HCT116 (cell line): ENCODE measurements at regions of chr10 and their contacts with region 1.

Region 1: GRCh38 chr10:28302638-28303488 is at the start of gene MPP7:
- DNase-seq: peak; percentile 98
- ATAC-seq: peak; percentile 98
- H3K4me3 ChIP-seq: peak within 1 kb of the TSS; percentile 59 to 70
- H3K27ac ChIP-seq: peak within 1 kb of the TSS; percentile 97
- H3K4me1 ChIP-seq: peaks cover 27 to 32% of the 10 kb centered on the region in 2 experiments
- H3K27me3 ChIP-seq: peaks cover 11% of the 10 kb centered on the region
- CTCF ChIP-seq: peak; percentile 19 to 29 (median 22); a peak in 3 of 6 replicates
- POLR2A ChIP-seq: no peak
- RAD21 ChIP-seq: peak; percentile 52
- total RNA-seq, gene MPP7: 64.5 TPM

Region 2: DNA sequence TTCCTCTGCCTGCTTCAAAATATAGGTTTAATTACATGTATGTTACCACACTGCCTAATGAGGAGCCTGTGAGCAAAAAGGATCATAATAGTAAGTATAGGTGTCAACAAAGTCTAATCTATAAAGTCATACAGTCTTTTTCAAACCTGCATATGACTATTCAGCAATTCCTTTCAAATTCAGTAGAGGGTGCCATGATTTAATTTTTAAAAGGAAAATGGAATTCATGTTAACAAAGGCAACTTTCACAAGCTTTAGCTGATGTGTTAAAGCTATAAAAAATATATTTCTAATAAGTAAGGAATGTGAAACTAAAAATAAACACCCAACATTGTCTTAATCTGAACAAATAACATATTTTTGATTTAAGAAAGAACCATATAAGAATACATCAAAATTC is 52.1 kb before region 1 on chr10:
- CTCF ChIA-PET with region 1: interaction called, 7 read pairs
- POLR2A ChIA-PET with region 1: interaction called, 5 read pairs
- RAD21 ChIA-PET with region 1: no interaction called
- intact Hi-C with region 1: loop called (anchors 5 kb)
- DNase-seq: no peak
- ATAC-seq: no peak
- H3K4me3 ChIP-seq: no peak overlapping the region
- H3K27ac ChIP-seq: peak overlapping the region; percentile 44
- H3K4me1 ChIP-seq: peaks cover 60 to 88% of the 10 kb centered on the region in 2 experiments
- H3K27me3 ChIP-seq: no peaks in the 10 kb centered on the region
- CTCF ChIP-seq: peak; percentile 40 to 85 (median 66); a peak in 5 of 6 replicates
- POLR2A ChIP-seq: no peak
- RAD21 ChIP-seq: peak; percentile 80

Region 3: DNA sequence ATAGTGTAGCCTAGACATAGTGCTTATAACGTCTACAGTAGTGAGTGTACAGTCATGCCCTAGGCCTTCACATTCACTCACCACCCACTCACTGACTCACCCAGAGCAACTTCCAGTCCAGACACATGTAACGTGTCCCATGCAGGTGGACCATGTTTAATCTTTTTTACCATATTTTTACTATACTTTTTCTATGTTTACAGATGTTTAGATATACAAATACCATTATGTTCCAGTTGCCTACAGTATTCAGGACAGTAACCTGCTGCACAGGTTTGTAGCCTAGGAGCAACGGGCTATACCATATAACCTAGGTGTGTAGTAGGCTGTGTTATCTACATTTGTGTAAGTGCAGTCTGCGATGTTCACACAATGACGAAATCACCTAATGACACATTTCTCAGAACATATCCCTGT is 11.0 kb before region 1 on chr10:
- CTCF ChIA-PET with region 1: interaction called, 6 read pairs
- POLR2A ChIA-PET with region 1: interaction called, 20 read pairs
- RAD21 ChIA-PET with region 1: interaction called in 1 of 2 experiments, 3 read pairs
- intact Hi-C with region 1: no loop called
- DNase-seq: peak; percentile 71
- ATAC-seq: peak; percentile 99
- H3K4me3 ChIP-seq: peak overlapping the region in 1 of 2 experiments; percentile 40; a peak in 2 of 4 replicates
- H3K27ac ChIP-seq: peak overlapping the region; percentile 57; the same call in 1 of the 2 replicates
- H3K4me1 ChIP-seq: peaks cover 46 to 48% of the 10 kb centered on the region in 2 experiments
- H3K27me3 ChIP-seq: no peaks in the 10 kb centered on the region
- CTCF ChIP-seq: no peak
- POLR2A ChIP-seq: no peak
- RAD21 ChIP-seq: no peak

Region 4: GRCh38 chr10:28320799-28321198 is 17.9 kb after region 1 on chr10:
- CTCF ChIA-PET with region 1: interaction called, 7 read pairs
- POLR2A ChIA-PET with region 1: interaction called, 12 read pairs
- RAD21 ChIA-PET with region 1: no interaction called
- intact Hi-C with region 1: no loop called
- DNase-seq: no peak
- ATAC-seq: no peak
- H3K4me3 ChIP-seq: no peak overlapping the region
- H3K27ac ChIP-seq: no peak overlapping the region
- H3K4me1 ChIP-seq: peaks cover 24 to 29% of the 10 kb centered on the region in 2 experiments
- H3K27me3 ChIP-seq: no peaks in the 10 kb centered on the region
- CTCF ChIP-seq: no peak
- POLR2A ChIP-seq: no peak
- RAD21 ChIP-seq: no peak